ENCODE measurements at regions of chr6 and their contacts with region 1.

Region 1: GRCh38 chr6:87078983-87079616 is 15.8 kb downstream of the CGA start:
- DNase-seq: peak in 33 of 35 experiments; percentile 3 to 66 (median 30)
- ATAC-seq: peak; percentile 52 to 60 (median 54)
- H3K4me3 ChIP-seq: no peak overlapping the region
- H3K4me3 Mint-ChIP-seq: no peak overlapping the region
- H3K27ac ChIP-seq: no peak overlapping the region
- H3K27ac Mint-ChIP-seq: no peak overlapping the region
- H3K4me1 ChIP-seq: no peaks in the 10 kb centered on the region
- H3K4me1 Mint-ChIP-seq: no peaks in the 10 kb centered on the region
- H3K27me3 ChIP-seq: no peaks in the 10 kb centered on the region
- H3K27me3 Mint-ChIP-seq: peaks cover 17 to 21% of the 10 kb centered on the region in 2 donors

Region 2: GRCh38 chr6:87066449-87067333 is 12.4 kb before region 1 on chr6:
- CTCF ChIA-PET with region 1: interaction called, 4 to 10 read pairs
- POLR2A ChIA-PET with region 1: no interaction called
- DNase-seq: peak in 22 of 35 experiments; percentile 3 to 61 (median 16)
- ATAC-seq: no peak
- H3K4me3 ChIP-seq: no peak overlapping the region
- H3K4me3 Mint-ChIP-seq: peak overlapping the region in 1 of 3 donors; percentile 5
- H3K27ac ChIP-seq: no peak overlapping the region
- H3K27ac Mint-ChIP-seq: no peak overlapping the region
- H3K4me1 ChIP-seq: no peaks in the 10 kb centered on the region
- H3K4me1 Mint-ChIP-seq: peaks cover 0 to 3% (median 0%) of the 10 kb centered on the region in 3 donors
- H3K27me3 ChIP-seq: peaks cover 0 to 7% of the 10 kb centered on the region in 2 experiments
- H3K27me3 Mint-ChIP-seq: peaks cover 8 to 25% of the 10 kb centered on the region in 2 donors